Dendritic cell treated with granulocyte-macrophage colony-stimulating factor and Interleukin-4, amounts not matched to agents 40 ng/mL and 50 ng/mL, for 4 days (primary cell): ENCODE measurements at regions of chr7 and their contacts with region 1.

Region 1: GRCh38 chr7:70178787-70179186 is 580.5 kb downstream of the AUTS2 start:
- H3K4me3 Mint-ChIP-seq: no peak overlapping the region
- H3K27ac Mint-ChIP-seq: peak overlapping the region; percentile 97
- H3K4me1 Mint-ChIP-seq: peaks cover 27% of the 10 kb centered on the region
- H3K27me3 Mint-ChIP-seq: peaks cover 42% of the 10 kb centered on the region

Region 2: GRCh38 chr7:69825113-69825616 is 353.6 kb before region 1 on chr7:
- intact Hi-C with region 1: loop called (anchors 10 kb)
- H3K4me3 Mint-ChIP-seq: no peak overlapping the region
- H3K27ac Mint-ChIP-seq: peak overlapping the region; percentile 66
- H3K4me1 Mint-ChIP-seq: peaks cover 25% of the 10 kb centered on the region
- H3K27me3 Mint-ChIP-seq: peaks cover 38% of the 10 kb centered on the region

Region 3: GRCh38 chr7:70361821-70362220 is 183.0 kb after region 1 on chr7:
- intact Hi-C with region 1: loop called (anchors 5 kb)
- H3K4me3 Mint-ChIP-seq: no peak overlapping the region
- H3K27ac Mint-ChIP-seq: peak overlapping the region; percentile 87
- H3K4me1 Mint-ChIP-seq: peaks cover 23% of the 10 kb centered on the region
- H3K27me3 Mint-ChIP-seq: no peaks in the 10 kb centered on the region